OCI-LY7 (cell line): ENCODE measurements at regions of chr4 and their contacts with region 1.

Region 1: GRCh38 chr4:242121-242848 is 63.0 kb downstream of the ZNF732 start:
- DNase-seq: peak; percentile 84
- H3K4me3 ChIP-seq: peak overlapping the region; percentile 34
- H3K27ac ChIP-seq: no peak overlapping the region
- H3K4me1 ChIP-seq: no peaks in the 10 kb centered on the region
- CTCF ChIP-seq: peak; percentile 93

Region 2: GRCh38 chr4:256492-256891 is 14.2 kb after region 1 on chr4:
- CTCF ChIA-PET with region 1: no interaction called
- POLR2A ChIA-PET with region 1: no interaction called
- intact Hi-C with region 1: no loop called
- DNase-seq: no peak
- H3K4me3 ChIP-seq: no peak overlapping the region
- H3K27ac ChIP-seq: no peak overlapping the region
- H3K4me1 ChIP-seq: no peaks in the 10 kb centered on the region
- CTCF ChIP-seq: no peak

Region 3: DNA sequence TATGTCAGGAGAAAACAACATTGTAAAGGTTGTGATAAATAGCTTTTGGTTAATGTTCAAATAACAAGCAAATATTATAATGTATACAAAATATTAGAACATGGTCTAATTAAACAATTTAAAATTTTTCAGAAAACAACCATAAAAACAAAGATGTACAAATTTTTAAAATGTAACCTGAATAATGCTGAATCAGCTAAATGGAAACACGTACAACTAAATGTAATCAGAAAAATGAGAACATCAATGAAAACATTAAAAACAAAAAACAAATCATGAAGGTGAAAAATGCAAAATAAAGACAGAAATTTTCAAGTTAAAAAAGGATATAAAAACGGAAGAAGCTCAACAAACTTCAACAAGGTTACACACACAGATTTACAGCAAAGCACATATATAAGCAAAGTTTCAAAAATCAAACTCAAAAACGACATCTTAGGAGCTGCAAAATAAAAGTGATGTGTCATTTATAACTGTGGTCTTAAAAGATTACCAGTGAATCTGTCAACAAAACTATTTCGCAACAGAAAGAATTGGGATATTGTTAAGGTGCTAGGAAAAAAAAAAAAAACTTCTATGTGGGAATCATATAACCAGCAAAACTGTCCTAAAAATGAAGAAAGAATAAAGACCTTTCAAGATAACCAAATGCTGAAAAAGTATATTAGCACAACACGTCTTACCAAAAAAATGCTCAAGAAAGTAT is 31.2 kb after region 1 on chr4:
- CTCF ChIA-PET with region 1: no interaction called
- POLR2A ChIA-PET with region 1: no interaction called
- intact Hi-C with region 1: no loop called
- DNase-seq: no peak
- H3K4me3 ChIP-seq: no peak overlapping the region
- H3K27ac ChIP-seq: no peak overlapping the region
- H3K4me1 ChIP-seq: no peaks in the 10 kb centered on the region
- CTCF ChIP-seq: no peak

Region 4: GRCh38 chr4:335515-335914 is 93.2 kb after region 1 on chr4:
- CTCF ChIA-PET with region 1: no interaction called
- POLR2A ChIA-PET with region 1: no interaction called
- intact Hi-C with region 1: loop called (anchors 1 kb)
- DNase-seq: no peak
- H3K4me3 ChIP-seq: no peak overlapping the region
- H3K27ac ChIP-seq: no peak overlapping the region
- H3K4me1 ChIP-seq: peaks cover 6% of the 10 kb centered on the region
- CTCF ChIP-seq: no peak